Heart right ventricle (tissue), 16 donors: ENCODE measurements at regions of chr2 and their contacts with region 1.

Region 1: DNA sequence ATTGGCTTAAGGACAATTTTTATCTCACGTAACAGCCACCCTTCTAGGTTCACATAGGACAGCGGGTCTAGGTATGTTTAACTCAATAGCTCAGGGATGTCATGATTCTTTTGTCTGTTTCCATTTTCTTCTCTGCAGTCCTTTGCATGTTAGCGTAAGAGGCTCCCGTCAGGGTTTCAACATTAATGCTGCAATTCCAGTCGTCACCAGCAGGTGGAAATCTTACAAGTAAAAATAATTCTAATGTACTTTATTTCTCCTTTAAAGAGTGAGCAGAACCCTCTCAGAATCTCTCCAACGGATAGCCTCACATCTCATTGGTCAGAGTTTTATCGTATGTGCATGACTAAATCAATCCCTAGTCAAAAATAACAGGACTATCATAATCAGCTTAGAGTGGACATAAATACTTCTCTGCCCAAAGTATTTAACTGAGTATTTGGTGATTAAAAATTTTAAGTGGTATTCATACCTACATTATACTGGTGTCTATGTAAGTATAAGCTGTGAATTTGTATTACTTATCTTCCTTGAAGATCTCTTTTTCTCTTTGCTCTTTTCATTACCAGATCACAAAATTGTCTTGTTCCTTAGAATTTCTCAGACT is 487.2 kb upstream of the GCFC2 start:
- DNase-seq: peak in 1 of 2 donors; percentile 33
- ATAC-seq: no peak
- H3K4me3 ChIP-seq: no peak overlapping the region
- H3K27ac ChIP-seq: no peak overlapping the region
- H3K4me1 ChIP-seq: no peaks in the 10 kb centered on the region
- H3K27me3 ChIP-seq: peaks cover 0 to 8% (median 0%) of the 10 kb centered on the region in 7 donors
- CTCF ChIP-seq: peak; percentile 44 to 82 (median 72)

Region 2: DNA sequence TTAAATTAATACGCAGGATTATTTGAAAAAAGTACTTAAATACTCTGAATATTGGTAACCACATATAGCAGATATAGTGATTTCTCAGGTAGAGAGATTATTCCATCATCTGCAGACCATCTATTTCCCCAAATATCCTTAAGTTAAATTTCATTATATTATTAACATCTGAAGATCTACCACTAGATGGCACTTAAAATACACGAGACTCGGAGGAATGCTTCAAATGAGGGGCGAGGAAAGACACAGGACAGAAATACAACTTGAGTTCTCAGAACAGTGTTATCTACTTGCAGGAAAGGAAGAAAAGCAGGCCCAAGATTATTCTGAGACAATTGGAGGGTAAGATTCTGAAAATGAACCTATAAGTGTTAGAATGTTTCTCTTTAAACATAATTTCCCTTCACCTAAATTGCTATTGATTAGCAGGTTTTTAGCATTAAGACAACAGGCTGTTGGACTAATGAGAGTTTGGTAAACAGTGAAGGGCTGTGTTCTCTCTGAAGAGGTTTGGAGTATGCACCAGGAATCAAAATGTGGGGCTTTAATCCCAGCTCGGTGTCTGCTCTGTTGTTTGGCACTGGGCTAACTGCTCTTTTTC is 410.3 kb before region 1 on chr2:
- intact Hi-C with region 1: loop called in 1 of 10 experiments (anchors 10 kb)
- DNase-seq: no peak
- ATAC-seq: peak in 1 of 8 donors; percentile 25
- H3K4me3 ChIP-seq: no peak overlapping the region
- H3K27ac ChIP-seq: no peak overlapping the region
- H3K4me1 ChIP-seq: no peaks in the 10 kb centered on the region
- H3K27me3 ChIP-seq: peaks cover 0 to 9% (median 0%) of the 10 kb centered on the region in 7 donors
- CTCF ChIP-seq: peak in 8 of 9 donors; percentile 13 to 60 (median 44)

Region 3: DNA sequence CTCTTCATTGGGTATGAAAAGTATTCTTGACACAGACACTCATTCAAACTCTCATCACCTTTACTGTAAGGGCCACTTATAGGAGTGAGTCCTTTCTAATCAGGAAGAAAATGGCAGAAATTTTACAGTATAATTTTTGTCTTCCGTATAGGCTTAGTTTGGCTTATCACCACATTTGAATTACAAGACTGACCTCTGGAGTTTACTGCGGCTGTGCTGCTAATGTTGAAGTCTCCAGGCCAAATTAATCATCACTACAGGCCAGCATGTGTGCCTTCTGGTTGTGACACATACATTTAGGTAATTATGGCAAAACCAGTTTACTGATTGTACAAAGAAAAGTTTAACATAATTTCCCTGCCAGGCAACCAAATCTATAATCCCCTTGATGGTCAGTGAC is 266.4 kb after region 1 on chr2:
- intact Hi-C with region 1: loop called in 2 of 10 experiments (anchors 5 to 10 kb)
- DNase-seq: no peak
- ATAC-seq: no peak
- H3K4me3 ChIP-seq: no peak overlapping the region
- H3K27ac ChIP-seq: no peak overlapping the region
- H3K4me1 ChIP-seq: no peaks in the 10 kb centered on the region
- H3K27me3 ChIP-seq: no peaks in the 10 kb centered on the region
- CTCF ChIP-seq: peak in 1 of 9 donors; percentile 27

Region 4: DNA sequence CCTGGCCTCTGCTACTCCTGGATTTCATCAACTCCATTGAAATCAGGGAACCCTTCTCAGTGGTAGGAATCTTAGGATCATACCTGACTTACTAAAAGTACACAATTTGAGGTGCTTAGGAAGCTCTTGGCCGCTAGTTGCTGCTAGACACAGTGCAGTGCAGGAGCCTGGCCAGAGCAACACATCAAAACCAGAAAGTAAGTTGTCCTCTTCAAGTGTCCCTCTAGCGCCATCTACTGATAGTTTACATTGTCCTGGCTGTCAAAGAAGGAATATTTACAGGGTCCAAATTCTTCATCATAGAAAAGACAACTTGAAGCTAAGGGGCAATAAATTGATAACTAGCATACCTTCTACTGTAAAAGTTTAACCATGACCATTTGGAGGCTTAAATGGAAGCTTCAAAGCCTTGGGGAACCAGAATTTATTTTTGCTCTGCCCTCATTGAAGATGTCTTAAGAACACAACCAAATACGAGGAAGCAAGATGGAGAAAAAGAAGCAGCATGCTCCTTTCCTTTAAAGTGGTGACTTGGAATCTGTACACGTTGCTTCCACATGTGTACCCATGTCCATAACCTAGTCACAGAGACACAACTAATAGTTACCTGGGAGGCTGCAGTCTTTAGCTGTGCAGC is 401.9 kb after region 1 on chr2:
- intact Hi-C with region 1: loop called in 9 of 10 experiments (anchors 2 to 5 kb)
- DNase-seq: peak; percentile 14 to 57
- ATAC-seq: peak; percentile 62 to 86 (median 76)
- H3K4me3 ChIP-seq: no peak overlapping the region
- H3K27ac ChIP-seq: no peak overlapping the region
- H3K4me1 ChIP-seq: no peaks in the 10 kb centered on the region
- H3K27me3 ChIP-seq: no peaks in the 10 kb centered on the region
- CTCF ChIP-seq: peak; percentile 51 to 80 (median 71)